ENCODE measurements at regions of chr4 and their contacts with region 1.

Region 1: DNA sequence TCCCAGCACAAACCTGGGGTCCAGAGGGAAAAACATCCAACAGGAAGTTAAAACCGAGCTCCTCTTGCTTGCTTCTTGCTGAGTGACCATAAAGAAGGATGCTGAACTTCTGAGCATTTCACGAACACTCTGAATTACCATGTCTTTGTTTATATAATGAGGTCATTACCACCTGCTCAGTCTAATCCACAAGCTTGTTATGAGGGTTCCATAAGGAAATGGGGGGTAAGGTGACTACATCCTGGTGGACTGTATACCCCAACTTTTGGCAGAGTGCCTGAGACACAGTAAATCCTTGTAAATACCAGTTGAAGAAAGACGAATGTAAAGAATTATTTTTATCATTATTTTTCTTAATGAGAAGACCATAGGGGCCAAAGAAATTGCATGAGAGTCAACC is 16.8 kb downstream of the CCDC149 start:
- DNase-seq: no peak
- H3K4me3 ChIP-seq: no peak overlapping the region
- H3K27ac ChIP-seq: no peak overlapping the region
- H3K4me1 ChIP-seq: no peaks in the 10 kb centered on the region
- H3K27me3 ChIP-seq: no peaks in the 10 kb centered on the region
- CTCF ChIP-seq: no peak

Region 2: DNA sequence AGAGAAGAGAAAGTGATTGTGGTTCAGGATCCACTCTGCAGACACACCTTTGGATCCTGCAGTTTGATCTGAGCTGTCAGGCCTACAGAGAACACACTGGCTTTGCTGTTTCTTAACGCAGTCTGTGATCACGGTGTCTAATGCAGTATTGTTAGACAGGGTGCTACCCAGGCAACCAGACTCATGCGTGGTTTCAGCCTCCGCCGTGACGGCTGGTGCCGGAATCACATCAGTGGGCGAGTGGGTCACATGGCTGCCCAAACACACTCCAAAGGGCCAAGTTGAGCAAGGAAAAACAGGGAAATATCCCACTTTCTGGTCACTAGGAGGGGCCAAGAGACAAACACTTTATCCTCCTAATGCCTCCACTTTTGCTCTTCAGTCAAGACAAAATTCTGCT is 10.7 kb before region 1 on chr4:
- CTCF ChIA-PET with region 1: interaction called, 17 read pairs
- POLR2A ChIA-PET with region 1: no interaction called
- intact Hi-C with region 1: no loop called
- DNase-seq: no peak
- H3K4me3 ChIP-seq: no peak overlapping the region
- H3K27ac ChIP-seq: no peak overlapping the region
- H3K4me1 ChIP-seq: no peaks in the 10 kb centered on the region
- H3K27me3 ChIP-seq: no peaks in the 10 kb centered on the region
- CTCF ChIP-seq: no peak